ENCODE measurements at regions of chr17 and their contacts with region 1.

Region 1: GRCh38 chr17:27217631-27218030 is 76.3 kb upstream of the WSB1 start:
- DNase-seq: no peak
- ATAC-seq: no peak
- H3K4me3 Mint-ChIP-seq: no peak overlapping the region
- H3K27ac Mint-ChIP-seq: no peak overlapping the region
- H3K4me1 Mint-ChIP-seq: peaks cover 10% of the 10 kb centered on the region
- H3K27me3 Mint-ChIP-seq: no peaks in the 10 kb centered on the region

Region 2: GRCh38 chr17:27206447-27206846 is 11.2 kb before region 1 on chr17:
- CTCF ChIA-PET with region 1: interaction called, 11 read pairs
- POLR2A ChIA-PET with region 1: no interaction called
- DNase-seq: no peak
- ATAC-seq: no peak
- H3K4me3 Mint-ChIP-seq: no peak overlapping the region
- H3K27ac Mint-ChIP-seq: no peak overlapping the region
- H3K4me1 Mint-ChIP-seq: no peaks in the 10 kb centered on the region
- H3K27me3 Mint-ChIP-seq: peaks cover 12% of the 10 kb centered on the region

Region 3: DNA sequence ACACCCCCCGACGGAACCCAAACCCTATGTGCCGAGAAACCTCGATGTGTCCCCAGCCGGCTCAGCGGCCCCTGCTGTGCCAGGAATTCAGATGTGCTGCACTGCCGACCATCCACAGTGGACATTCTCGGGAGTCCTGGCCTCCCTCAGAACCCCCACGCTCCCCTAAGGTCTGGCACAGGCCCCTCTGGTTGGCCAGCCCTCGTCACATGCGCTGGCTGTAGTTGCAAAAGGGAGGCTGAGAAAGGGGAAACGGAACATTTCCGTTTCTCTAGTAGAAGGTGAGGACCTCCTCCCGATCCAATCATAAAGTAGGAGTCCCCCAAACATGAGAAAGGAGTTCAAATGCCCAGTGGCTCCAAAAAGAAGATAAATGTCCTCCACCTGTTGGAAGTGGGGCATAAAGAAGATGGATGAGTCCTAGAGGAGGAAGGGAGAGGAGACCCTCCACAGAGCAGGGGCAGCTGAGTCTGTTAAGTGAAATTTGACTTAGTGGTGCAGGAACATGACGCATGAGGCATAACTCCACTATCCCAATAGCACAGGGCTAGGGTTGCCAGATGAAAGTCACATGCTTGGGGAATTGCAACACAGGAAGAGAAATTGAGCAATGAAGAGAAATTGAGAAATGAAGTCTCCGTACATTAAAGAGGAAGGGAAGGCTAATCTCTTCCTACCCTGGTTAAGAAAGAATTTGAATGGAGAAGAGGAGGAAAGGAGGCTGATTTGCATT is 27.0 kb after region 1 on chr17:
- CTCF ChIA-PET with region 1: no interaction called
- POLR2A ChIA-PET with region 1: no interaction called
- DNase-seq: no peak
- ATAC-seq: no peak
- H3K4me3 Mint-ChIP-seq: no peak overlapping the region
- H3K27ac Mint-ChIP-seq: no peak overlapping the region
- H3K4me1 Mint-ChIP-seq: peaks cover 16% of the 10 kb centered on the region
- H3K27me3 Mint-ChIP-seq: peaks cover 11% of the 10 kb centered on the region

Measured in activated CD8-positive, alpha-beta T cell treated with anti-CD3 and anti-CD28 coated beads, Interleukin-2, amount 10 ng/mL, durations not matched to agents 7 days and 5 days (primary cell).